Common myeloid progenitor, CD34-positive (primary cell): ENCODE measurements at regions of chr6 and their contacts with region 1.

Region 1: GRCh38 chr6:106444777-106445507 is 84.4 kb downstream of the CRYBG1 start:
- DNase-seq: peak; percentile 75 to 83 (median 83)
- H3K4me3 ChIP-seq: no peak overlapping the region
- H3K27ac ChIP-seq: no peak overlapping the region
- H3K4me1 ChIP-seq: peaks cover 12 to 34% (median 20%) of the 10 kb centered on the region in 4 experiments
- H3K27me3 ChIP-seq: peaks cover 0 to 19% (median 2%) of the 10 kb centered on the region in 5 experiments

Region 2: GRCh38 chr6:106155219-106155830 is 289.6 kb before region 1 on chr6:
- CTCF ChIA-PET with region 1: no interaction called
- POLR2A ChIA-PET with region 1: no interaction called
- DNase-seq: no peak
- H3K4me3 ChIP-seq: no peak overlapping the region
- H3K27ac ChIP-seq: no peak overlapping the region
- H3K4me1 ChIP-seq: no peaks in the 10 kb centered on the region
- H3K27me3 ChIP-seq: no peaks in the 10 kb centered on the region

Region 3: DNA sequence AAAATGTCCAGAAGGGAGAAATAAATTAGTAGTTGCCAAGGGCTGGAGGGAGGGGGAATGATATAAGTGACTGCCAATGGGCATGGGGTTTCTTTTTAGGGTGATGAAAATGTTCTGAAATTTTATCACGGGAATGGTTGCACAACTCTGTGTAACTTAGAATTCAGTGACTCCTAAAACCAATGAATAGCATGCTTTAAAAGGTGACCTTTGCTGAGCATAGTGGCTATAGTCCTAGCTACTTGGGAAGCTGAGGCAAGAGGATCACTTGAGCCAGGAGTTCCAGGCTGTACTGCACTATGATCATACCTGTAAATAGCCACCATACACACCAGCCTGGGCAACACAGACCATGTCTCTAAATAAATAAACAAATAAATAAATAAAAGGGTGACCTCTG is 228.4 kb before region 1 on chr6:
- CTCF ChIA-PET with region 1: no interaction called
- POLR2A ChIA-PET with region 1: no interaction called
- DNase-seq: no peak
- H3K4me3 ChIP-seq: no peak overlapping the region
- H3K27ac ChIP-seq: no peak overlapping the region
- H3K4me1 ChIP-seq: no peaks in the 10 kb centered on the region
- H3K27me3 ChIP-seq: no peaks in the 10 kb centered on the region

Region 4: GRCh38 chr6:106334646-106335448 is 110.1 kb before region 1 on chr6:
- CTCF ChIA-PET with region 1: interaction called, 15 read pairs
- POLR2A ChIA-PET with region 1: interaction called, 4 read pairs
- DNase-seq: peak; percentile 66 to 81 (median 78)
- H3K4me3 ChIP-seq: no peak overlapping the region
- H3K27ac ChIP-seq: no peak overlapping the region
- H3K4me1 ChIP-seq: peaks cover 0 to 4% (median 0%) of the 10 kb centered on the region in 4 experiments
- H3K27me3 ChIP-seq: peaks cover 0 to 7% (median 4%) of the 10 kb centered on the region in 5 experiments

Region 5: DNA sequence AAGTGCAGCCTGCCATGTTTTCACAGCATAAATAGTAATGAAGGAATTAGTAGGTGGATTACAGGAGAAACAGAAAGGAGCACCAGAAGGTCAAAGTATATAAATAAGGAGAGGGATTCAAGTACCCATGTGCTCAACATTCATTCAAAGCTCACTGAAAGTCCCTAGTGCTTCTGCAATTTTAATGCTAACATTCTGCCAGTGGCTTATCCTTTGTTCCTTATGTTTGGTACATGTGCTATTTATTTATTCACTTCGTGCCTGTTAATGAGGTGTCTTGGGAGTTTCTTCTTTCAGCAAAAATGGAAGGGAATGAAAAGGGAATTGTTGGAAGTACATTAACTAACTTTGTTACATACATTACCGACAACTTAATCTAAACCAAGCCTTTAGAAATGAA is 21.3 kb after region 1 on chr6:
- CTCF ChIA-PET with region 1: interaction called, 12 read pairs
- POLR2A ChIA-PET with region 1: no interaction called
- DNase-seq: no peak
- H3K4me3 ChIP-seq: no peak overlapping the region
- H3K27ac ChIP-seq: no peak overlapping the region
- H3K4me1 ChIP-seq: no peaks in the 10 kb centered on the region
- H3K27me3 ChIP-seq: no peaks in the 10 kb centered on the region

Region 6: GRCh38 chr6:106512048-106512967 is 67.4 kb after region 1 on chr6:
- CTCF ChIA-PET with region 1: interaction called, 14 read pairs
- POLR2A ChIA-PET with region 1: no interaction called
- DNase-seq: peak; percentile 73 to 85 (median 80)
- H3K4me3 ChIP-seq: peak overlapping the region; percentile 63 to 90 (median 82)
- H3K27ac ChIP-seq: peak overlapping the region; percentile 61 to 84
- H3K4me1 ChIP-seq: peaks cover 46 to 81% (median 65%) of the 10 kb centered on the region in 4 experiments
- H3K27me3 ChIP-seq: peaks cover 0 to 3% (median 0%) of the 10 kb centered on the region in 5 experiments

Region 7: GRCh38 chr6:106556368-106556960 is 111.5 kb after region 1 on chr6:
- CTCF ChIA-PET with region 1: interaction called, 309 read pairs
- POLR2A ChIA-PET with region 1: no interaction called
- DNase-seq: peak; percentile 52 to 67 (median 66)
- H3K4me3 ChIP-seq: no peak overlapping the region
- H3K27ac ChIP-seq: no peak overlapping the region
- H3K4me1 ChIP-seq: peaks cover under 1 to 7% (median 3%) of the 10 kb centered on the region in 4 experiments
- H3K27me3 ChIP-seq: no peaks in the 10 kb centered on the region

Region 8: GRCh38 chr6:106568530-106568929 is 123.6 kb after region 1 on chr6:
- CTCF ChIA-PET with region 1: interaction called, 309 read pairs
- POLR2A ChIA-PET with region 1: no interaction called
- DNase-seq: no peak
- H3K4me3 ChIP-seq: no peak overlapping the region
- H3K27ac ChIP-seq: no peak overlapping the region
- H3K4me1 ChIP-seq: no peaks in the 10 kb centered on the region
- H3K27me3 ChIP-seq: no peaks in the 10 kb centered on the region

Region 9: GRCh38 chr6:106979427-106979884 is 534.5 kb after region 1 on chr6:
- CTCF ChIA-PET with region 1: interaction called, 14 read pairs
- POLR2A ChIA-PET with region 1: no interaction called
- DNase-seq: peak; percentile 80 to 87 (median 82)
- H3K4me3 ChIP-seq: no peak overlapping the region
- H3K27ac ChIP-seq: no peak overlapping the region
- H3K4me1 ChIP-seq: peaks cover 4 to 10% (median 8%) of the 10 kb centered on the region in 4 experiments
- H3K27me3 ChIP-seq: peaks cover 4 to 31% (median 13%) of the 10 kb centered on the region in 5 experiments